ENCODE measurements at regions of chr1 and their contacts with region 1.

Region 1: DNA sequence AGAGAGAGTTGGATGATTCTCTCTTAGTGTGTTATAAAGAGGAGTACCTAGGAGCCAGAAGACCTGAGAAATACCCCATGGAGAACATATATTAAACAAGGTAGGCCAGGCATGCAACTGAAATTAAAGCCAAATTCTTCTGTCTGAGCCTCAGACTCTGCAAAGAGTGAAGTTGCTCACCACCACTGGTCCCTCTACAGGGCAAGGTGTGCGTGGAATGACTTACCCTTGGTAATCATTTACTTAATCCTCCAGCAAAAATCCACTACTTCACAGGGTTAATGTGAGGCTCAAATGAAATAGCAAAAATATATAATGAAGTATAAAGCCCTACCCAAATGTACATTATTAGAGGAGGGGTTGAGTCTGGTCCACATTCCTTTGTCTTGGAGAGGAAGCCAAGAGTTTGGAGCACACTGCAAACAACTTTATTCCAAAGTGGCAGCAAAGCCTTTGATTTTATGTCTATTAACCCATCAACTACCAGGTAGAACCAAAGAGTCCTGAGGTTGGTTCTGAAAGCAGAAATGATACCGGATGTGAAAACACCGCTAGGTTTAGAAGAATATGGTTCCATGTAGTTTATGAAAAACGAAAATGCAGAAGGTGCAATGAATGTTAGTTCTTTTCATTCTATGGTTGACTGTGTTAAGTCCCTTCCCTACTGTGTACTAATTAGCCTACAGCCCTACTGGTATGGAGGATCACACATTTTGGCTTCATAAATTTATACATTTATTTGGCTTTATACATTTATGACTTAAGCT is 8.5 kb downstream of the SSR2 start:
- DNase-seq: no peak
- ATAC-seq: no peak
- H3K4me3 ChIP-seq: no peak overlapping the region
- H3K27ac ChIP-seq: no peak overlapping the region
- H3K4me1 ChIP-seq: peaks cover under 1% of the 10 kb centered on the region; the same call in 1 of the 2 replicates
- H3K27me3 ChIP-seq: no peaks in the 10 kb centered on the region
- CTCF ChIP-seq: no peak

Region 2: GRCh38 chr1:155882235-155882634 is 130.0 kb before region 1 on chr1:
- CTCF ChIA-PET with region 1: interaction called, 12 read pairs
- POLR2A ChIA-PET with region 1: no interaction called
- intact Hi-C with region 1: no loop called
- DNase-seq: no peak
- ATAC-seq: no peak
- H3K4me3 ChIP-seq: no peak overlapping the region
- H3K27ac ChIP-seq: no peak overlapping the region
- H3K4me1 ChIP-seq: peaks cover 10% of the 10 kb centered on the region
- H3K27me3 ChIP-seq: no peaks in the 10 kb centered on the region
- CTCF ChIP-seq: no peak

Measured in PC-3 (cell line).